ENCODE measurements at regions of chr5 and their contacts with region 1.

Region 1: GRCh38 chr5:132007399-132008165 is 3.9 kb downstream of the ACSL6 start:
- DNase-seq: peak; percentile 57 to 75
- ATAC-seq: peak; percentile 78 to 81
- H3K4me3 ChIP-seq: no peak overlapping the region
- H3K27ac ChIP-seq: peak overlapping the region in 1 of 4 donors; percentile 41
- H3K4me1 ChIP-seq: peaks cover 34 to 39% of the 10 kb centered on the region in 2 donors
- H3K27me3 ChIP-seq: no peaks in the 10 kb centered on the region
- CTCF ChIP-seq: peak; percentile 35 to 82 (median 80)
- POLR2A ChIP-seq: no peak

Region 2: DNA sequence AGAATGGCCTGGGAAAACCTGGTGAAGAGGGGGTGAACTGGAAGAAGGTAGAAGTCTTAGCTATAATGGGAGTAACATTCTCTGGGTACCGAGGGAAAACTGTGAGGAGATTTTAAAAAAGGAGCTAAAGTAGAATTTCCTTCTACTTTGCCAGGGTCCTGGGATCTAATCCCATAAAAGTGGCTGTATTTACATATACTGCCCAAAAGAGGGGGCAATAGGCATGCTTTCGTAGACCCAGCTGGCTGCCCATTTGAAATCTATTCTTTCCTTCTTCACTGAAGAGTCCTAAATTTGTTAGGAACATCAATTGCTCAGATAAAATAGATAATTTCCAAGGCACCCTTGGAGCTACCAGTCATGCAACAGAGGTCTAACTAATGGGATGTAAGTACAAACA is 584.5 kb before region 1 on chr5:
- in situ Hi-C with region 1: no loop called
- intact Hi-C with region 1: loop called (anchors 5 kb)
- DNase-seq: no peak
- ATAC-seq: no peak
- H3K4me3 ChIP-seq: no peak overlapping the region
- H3K27ac ChIP-seq: no peak overlapping the region
- H3K4me1 ChIP-seq: no peaks in the 10 kb centered on the region
- H3K27me3 ChIP-seq: no peaks in the 10 kb centered on the region
- CTCF ChIP-seq: no peak
- POLR2A ChIP-seq: no peak

Region 3: DNA sequence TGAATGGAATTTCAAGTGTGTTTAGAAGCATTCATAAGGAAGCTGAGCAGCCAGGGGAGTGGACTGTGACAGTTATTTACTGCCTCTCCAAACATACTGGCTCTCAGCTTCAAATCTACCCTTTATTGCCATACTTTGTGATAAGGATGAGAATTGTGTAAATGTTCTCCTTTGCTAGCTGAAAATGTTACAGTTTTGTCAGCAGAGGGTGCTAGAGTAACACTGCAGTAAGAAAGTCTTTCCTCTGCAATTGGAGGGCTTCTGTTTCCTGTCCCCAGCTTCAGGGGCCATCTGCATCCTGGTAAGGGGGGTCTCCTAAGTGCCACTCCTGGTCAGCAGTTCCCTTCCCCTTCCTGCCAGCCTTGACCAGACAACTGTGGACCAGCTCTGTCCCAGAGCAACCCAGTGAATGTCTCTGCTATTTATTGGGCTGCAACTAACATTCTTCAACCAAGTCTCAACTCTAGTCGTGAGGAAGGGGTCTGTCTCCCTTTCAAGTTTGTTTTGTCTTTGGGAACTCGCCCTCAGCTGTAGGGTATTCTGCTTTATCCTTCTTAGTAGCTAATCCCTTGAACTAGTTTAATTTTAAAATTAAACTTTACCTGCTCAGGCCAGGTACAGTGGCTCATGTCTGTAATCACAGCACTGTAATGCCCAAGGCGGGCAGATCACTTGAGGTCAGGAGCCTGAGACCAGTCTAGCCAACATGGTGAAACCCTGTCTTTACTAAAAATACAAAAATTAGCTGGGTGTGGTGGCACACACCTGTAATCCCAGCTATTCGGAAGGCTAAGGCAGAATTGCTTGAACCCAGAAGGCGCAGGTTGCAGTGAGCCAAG is 417.9 kb before region 1 on chr5:
- in situ Hi-C with region 1: loop called (anchors 5 to 10 kb)
- intact Hi-C with region 1: loop called (anchors 1 kb)
- DNase-seq: no peak
- ATAC-seq: peak; percentile 45 to 61
- H3K4me3 ChIP-seq: no peak overlapping the region
- H3K27ac ChIP-seq: no peak overlapping the region
- H3K4me1 ChIP-seq: peaks cover 6 to 18% of the 10 kb centered on the region in 2 donors
- H3K27me3 ChIP-seq: no peaks in the 10 kb centered on the region
- CTCF ChIP-seq: peak; percentile 77 to 91 (median 84)
- POLR2A ChIP-seq: no peak

Region 4: GRCh38 chr5:131710391-131710790 is 297.2 kb before region 1 on chr5:
- in situ Hi-C with region 1: no loop called
- intact Hi-C with region 1: no loop called
- DNase-seq: no peak
- ATAC-seq: no peak
- H3K4me3 ChIP-seq: no peak overlapping the region
- H3K27ac ChIP-seq: peak overlapping the region in 1 of 4 donors; percentile 72
- H3K4me1 ChIP-seq: peaks cover 33 to 46% of the 10 kb centered on the region in 2 donors
- H3K27me3 ChIP-seq: no peaks in the 10 kb centered on the region
- CTCF ChIP-seq: no peak
- POLR2A ChIP-seq: no peak

Region 5: DNA sequence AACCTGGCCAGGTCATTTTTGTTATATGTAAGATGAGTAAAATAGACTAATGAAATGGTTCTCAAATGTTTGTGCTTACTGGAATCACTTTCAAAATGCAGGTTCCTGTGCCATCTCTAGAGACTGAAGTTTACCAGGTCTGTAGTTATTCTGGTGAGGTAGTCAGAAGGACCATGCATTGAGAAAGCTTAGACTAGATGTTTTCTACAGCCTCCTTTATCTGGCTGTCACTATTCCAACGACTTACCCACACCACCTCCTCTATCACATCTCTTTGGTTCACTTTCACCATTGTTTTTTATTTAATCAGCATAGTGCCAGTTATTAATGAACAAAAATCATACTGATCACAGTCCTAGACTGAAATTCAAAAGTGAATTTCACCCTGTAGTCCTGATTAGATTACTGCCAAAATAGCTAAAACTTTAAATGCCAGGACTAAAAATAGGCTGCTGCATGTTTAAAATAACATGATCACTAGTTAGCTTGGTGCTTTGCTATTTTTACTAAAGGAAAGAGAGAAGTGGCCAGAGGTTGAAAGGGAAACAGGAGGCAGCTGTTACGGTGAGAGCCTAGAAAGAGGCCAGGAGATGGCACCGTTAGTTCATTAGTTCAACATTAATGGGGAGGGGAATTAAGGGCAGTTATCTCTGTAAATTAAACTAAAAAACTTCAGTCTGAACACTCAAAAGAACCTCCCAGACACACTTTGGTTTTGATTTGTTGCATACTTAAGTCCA is 196.9 kb before region 1 on chr5:
- in situ Hi-C with region 1: loop called (anchors 5 to 10 kb)
- intact Hi-C with region 1: loop called (anchors 1 kb)
- DNase-seq: no peak
- ATAC-seq: peak; percentile 93 to 95
- H3K4me3 ChIP-seq: no peak overlapping the region
- H3K27ac ChIP-seq: peak overlapping the region; percentile 59 to 80 (median 70)
- H3K4me1 ChIP-seq: peaks cover 29 to 37% of the 10 kb centered on the region in 2 donors
- H3K27me3 ChIP-seq: no peaks in the 10 kb centered on the region
- CTCF ChIP-seq: peak in 4 of 5 experiments; percentile 39 to 50 (median 42)
- POLR2A ChIP-seq: no peak

Region 6: GRCh38 chr5:132064738-132065331 is 57.3 kb after region 1 on chr5:
- in situ Hi-C with region 1: no loop called
- intact Hi-C with region 1: loop called (anchors 5 kb)
- DNase-seq: peak in 1 of 2 donors; percentile 36
- ATAC-seq: peak in 1 of 2 donors; percentile 64
- H3K4me3 ChIP-seq: no peak overlapping the region
- H3K27ac ChIP-seq: no peak overlapping the region
- H3K4me1 ChIP-seq: no peaks in the 10 kb centered on the region
- H3K27me3 ChIP-seq: no peaks in the 10 kb centered on the region
- CTCF ChIP-seq: peak; percentile 47 to 90 (median 81)
- POLR2A ChIP-seq: no peak

Measured in gastrocnemius medialis (tissue), 4 donors.